CD8-positive, alpha-beta T cell (primary cell): ENCODE measurements at regions of chr6 and their contacts with region 1.

Region 1: GRCh38 chr6:83514866-83515466 is 2.6 kb downstream of the PRSS35 start:
- DNase-seq: peak in 2 of 9 experiments; percentile 52 to 53
- ATAC-seq: no peak
- H3K4me3 ChIP-seq: no peak overlapping the region
- H3K4me3 Mint-ChIP-seq: no peak overlapping the region
- H3K27ac ChIP-seq: no peak overlapping the region
- H3K27ac Mint-ChIP-seq: no peak overlapping the region
- H3K4me1 ChIP-seq: no peaks in the 10 kb centered on the region
- H3K4me1 Mint-ChIP-seq: peaks cover 11% of the 10 kb centered on the region
- H3K27me3 ChIP-seq: no peaks in the 10 kb centered on the region
- H3K27me3 Mint-ChIP-seq: peaks cover 31% of the 10 kb centered on the region
- CTCF ChIP-seq: peak; percentile 71

Region 2: GRCh38 chr6:82237013-82237412 is 1278.0 kb before region 1 on chr6:
- CTCF ChIA-PET with region 1: no interaction called
- POLR2A ChIA-PET with region 1: no interaction called
- intact Hi-C with region 1: no loop called
- DNase-seq: no peak
- ATAC-seq: no peak
- H3K4me3 ChIP-seq: no peak overlapping the region
- H3K4me3 Mint-ChIP-seq: no peak overlapping the region
- H3K27ac ChIP-seq: no peak overlapping the region
- H3K27ac Mint-ChIP-seq: no peak overlapping the region
- H3K4me1 ChIP-seq: no peaks in the 10 kb centered on the region
- H3K4me1 Mint-ChIP-seq: peaks cover 28% of the 10 kb centered on the region
- H3K27me3 ChIP-seq: no peaks in the 10 kb centered on the region
- H3K27me3 Mint-ChIP-seq: no peaks in the 10 kb centered on the region
- CTCF ChIP-seq: no peak

Region 3: DNA sequence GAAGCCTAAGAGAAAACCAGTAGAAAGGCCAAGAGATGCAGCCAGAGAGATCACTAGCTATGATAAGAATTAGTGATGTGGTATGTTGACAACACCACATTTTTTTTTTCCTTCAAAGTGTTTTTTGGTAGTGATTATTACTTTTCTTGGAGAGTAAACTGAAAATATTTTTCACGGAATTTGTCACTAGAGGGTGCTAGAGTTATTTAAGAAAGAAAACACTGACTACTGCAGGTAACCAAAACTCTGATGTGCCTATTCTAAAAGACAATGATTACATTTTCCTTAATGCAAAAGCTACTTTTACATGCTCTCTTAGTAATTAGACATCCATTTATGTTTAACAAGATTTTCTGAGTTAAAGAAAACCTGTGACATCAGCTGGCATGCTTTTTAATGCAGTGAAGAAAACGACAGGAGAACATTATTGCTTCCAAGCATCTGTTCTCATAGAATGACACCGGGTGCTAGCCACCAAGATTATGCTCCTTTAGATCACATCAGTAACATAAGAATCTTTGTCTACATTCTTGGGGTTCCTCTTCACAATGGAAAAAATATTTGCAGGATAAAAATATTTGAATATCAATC is 293.0 kb before region 1 on chr6:
- CTCF ChIA-PET with region 1: interaction called, 40 read pairs
- POLR2A ChIA-PET with region 1: no interaction called
- intact Hi-C with region 1: loop called (anchors 1 to 2 kb)
- DNase-seq: peak in 2 of 9 experiments; percentile 43 to 47
- ATAC-seq: no peak
- H3K4me3 ChIP-seq: no peak overlapping the region
- H3K4me3 Mint-ChIP-seq: no peak overlapping the region
- H3K27ac ChIP-seq: no peak overlapping the region
- H3K27ac Mint-ChIP-seq: no peak overlapping the region
- H3K4me1 ChIP-seq: no peaks in the 10 kb centered on the region
- H3K4me1 Mint-ChIP-seq: no peaks in the 10 kb centered on the region
- H3K27me3 ChIP-seq: no peaks in the 10 kb centered on the region
- H3K27me3 Mint-ChIP-seq: no peaks in the 10 kb centered on the region
- CTCF ChIP-seq: peak; percentile 62